Aorta (tissue), 5 donors: ENCODE measurements at regions of chr1 and their contacts with region 1.

Region 1: GRCh38 chr1:26677306-26678115 is 18.3 kb upstream of the ARID1A start:
- DNase-seq: peak; percentile 76 to 84
- ATAC-seq: peak; percentile 91
- H3K4me3 ChIP-seq: no peak overlapping the region
- H3K27ac ChIP-seq: no peak overlapping the region
- H3K4me1 ChIP-seq: peaks cover 0 to 1% of the 10 kb centered on the region in 2 donors
- H3K27me3 ChIP-seq: no peaks in the 10 kb centered on the region

Region 2: DNA sequence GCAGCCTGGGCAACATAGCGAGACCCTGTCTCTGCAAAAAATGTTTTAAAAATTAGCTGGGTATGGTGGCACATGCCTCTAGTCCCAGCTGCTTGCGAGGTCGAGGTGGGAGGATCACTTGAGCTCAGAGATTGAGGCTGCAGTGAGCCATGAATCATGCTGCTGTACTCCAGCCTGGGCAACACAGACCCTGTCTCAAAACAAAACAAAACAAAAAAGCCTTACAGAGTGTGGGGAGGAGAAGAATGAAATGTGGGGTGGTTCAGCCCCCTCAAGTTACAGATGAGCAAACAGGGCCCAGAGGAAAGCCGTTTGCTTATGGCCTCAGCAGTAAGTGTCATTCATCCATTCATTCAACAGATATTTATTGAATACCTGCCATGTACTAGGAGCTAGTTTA is 107.2 kb before region 1 on chr1:
- intact Hi-C with region 1: no loop called
- DNase-seq: peak in 1 of 2 donors; percentile 4
- ATAC-seq: no peak
- H3K4me3 ChIP-seq: no peak overlapping the region
- H3K27ac ChIP-seq: no peak overlapping the region
- H3K4me1 ChIP-seq: no peaks in the 10 kb centered on the region
- H3K27me3 ChIP-seq: no peaks in the 10 kb centered on the region

Region 3: GRCh38 chr1:26602378-26602959 is 75.0 kb before region 1 on chr1:
- intact Hi-C with region 1: loop called in 1 of 2 experiments (anchors 1 kb)
- DNase-seq: no peak
- ATAC-seq: peak; percentile 70
- H3K4me3 ChIP-seq: peak overlapping the region in 1 of 2 donors; percentile 10
- H3K27ac ChIP-seq: no peak overlapping the region
- H3K4me1 ChIP-seq: no peaks in the 10 kb centered on the region
- H3K27me3 ChIP-seq: no peaks in the 10 kb centered on the region

Region 4: GRCh38 chr1:26627954-26628353 is 49.6 kb before region 1 on chr1:
- intact Hi-C with region 1: loop called in 1 of 2 experiments (anchors 5 kb)
- DNase-seq: no peak
- ATAC-seq: no peak
- H3K4me3 ChIP-seq: no peak overlapping the region
- H3K27ac ChIP-seq: no peak overlapping the region
- H3K4me1 ChIP-seq: no peaks in the 10 kb centered on the region
- H3K27me3 ChIP-seq: no peaks in the 10 kb centered on the region

Region 5: GRCh38 chr1:26744075-26744959 is 66.8 kb after region 1 on chr1:
- intact Hi-C with region 1: no loop called
- DNase-seq: peak; percentile 82 to 90
- ATAC-seq: peak; percentile 92
- H3K4me3 ChIP-seq: no peak overlapping the region
- H3K27ac ChIP-seq: peak overlapping the region; percentile 33 to 77
- H3K4me1 ChIP-seq: peaks cover 0 to 4% of the 10 kb centered on the region in 2 donors
- H3K27me3 ChIP-seq: no peaks in the 10 kb centered on the region

Region 6: DNA sequence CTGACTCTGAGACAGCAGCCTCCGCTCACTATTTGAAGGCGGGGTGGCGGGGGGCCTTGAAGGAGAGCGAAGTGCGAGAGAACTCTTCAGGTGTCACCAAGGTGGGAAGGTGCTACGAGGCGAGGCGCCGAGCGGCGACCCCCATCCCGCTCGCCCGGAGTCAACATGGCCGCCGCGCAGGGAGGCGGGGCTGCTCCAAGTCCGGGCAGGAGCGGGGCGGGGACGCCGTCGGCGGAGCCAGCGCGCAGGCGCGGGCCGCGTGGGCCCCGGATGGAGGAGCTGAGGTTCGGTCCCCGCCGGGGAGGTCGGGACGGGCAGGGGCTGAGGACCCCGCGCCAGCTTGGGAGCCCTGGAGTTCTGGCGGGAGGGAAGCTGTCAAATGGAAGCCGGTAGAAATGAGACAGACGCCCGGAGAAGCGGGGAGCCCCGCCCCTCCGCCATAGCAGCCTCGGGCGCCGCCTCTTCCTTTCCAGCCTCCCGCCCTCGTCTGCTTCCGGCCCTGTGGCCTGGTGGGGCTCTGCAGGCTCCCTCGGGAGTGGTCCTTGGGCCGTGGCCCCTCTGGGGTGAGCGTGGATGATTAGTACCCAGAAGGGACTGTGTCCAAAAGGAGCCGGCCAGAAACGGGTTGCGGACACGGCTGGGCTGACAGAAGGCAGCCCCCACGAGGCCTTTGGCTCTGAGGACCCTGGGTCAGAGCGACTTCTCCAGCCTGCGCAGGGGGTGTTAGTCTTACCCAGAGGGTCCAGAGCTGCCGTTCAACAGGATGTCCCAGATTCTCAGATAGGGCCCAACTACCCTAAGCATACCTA is 110.4 kb after region 1 on chr1 and contains the start of gene PIGV:
- intact Hi-C with region 1: loop called in 1 of 2 experiments (anchors 5 kb)
- DNase-seq: peak; percentile 93 to 96
- ATAC-seq: peak; percentile 93
- H3K4me3 ChIP-seq: peak within 1 kb of the TSS; percentile 48 to 71
- H3K27ac ChIP-seq: peak within 1 kb of the TSS; percentile 91 to 100
- H3K4me1 ChIP-seq: peaks cover 0 to 2% of the 10 kb centered on the region in 2 donors
- H3K27me3 ChIP-seq: no peaks in the 10 kb centered on the region
- total RNA-seq, gene PIGV: 6.8 to 10.3 TPM